ENCODE measurements at regions of chr22 and their contacts with region 1.

Region 1: DNA sequence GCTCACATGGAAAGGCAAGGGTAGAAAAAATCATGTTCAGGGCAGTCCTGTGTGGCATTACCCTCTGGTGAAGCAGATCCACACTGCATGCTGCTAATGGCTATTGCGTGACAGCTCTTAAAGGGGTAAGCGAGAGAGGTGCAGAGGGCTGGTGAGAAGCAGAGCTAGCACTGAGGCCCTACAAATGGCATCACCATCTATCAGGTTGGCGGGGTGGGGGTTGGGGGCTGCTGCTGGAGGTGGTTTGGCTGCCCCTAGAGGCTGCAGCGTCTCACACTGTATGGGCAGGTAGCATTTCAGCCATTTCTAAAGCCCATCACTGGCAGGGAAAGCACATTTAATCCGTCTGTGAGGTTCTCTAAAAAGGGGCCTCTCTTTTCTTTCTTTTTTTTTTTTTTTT is 16.9 kb upstream of the TMA7B start:
- DNase-seq: no peak
- ATAC-seq: peak; percentile 51
- H3K4me3 Mint-ChIP-seq: peak overlapping the region; percentile 79
- H3K27ac Mint-ChIP-seq: peak overlapping the region; percentile 95
- H3K4me1 Mint-ChIP-seq: peaks cover 83% of the 10 kb centered on the region
- H3K27me3 Mint-ChIP-seq: no peaks in the 10 kb centered on the region

Region 2: GRCh38 chr22:39908737-39909136 is 34.6 kb before region 1 on chr22:
- POLR2A ChIA-PET with region 1: interaction called, 20 read pairs
- DNase-seq: no peak
- ATAC-seq: peak; percentile 45
- H3K4me3 Mint-ChIP-seq: peak overlapping the region; percentile 99
- H3K27ac Mint-ChIP-seq: peak overlapping the region; percentile 96
- H3K4me1 Mint-ChIP-seq: peaks cover 65% of the 10 kb centered on the region
- H3K27me3 Mint-ChIP-seq: no peaks in the 10 kb centered on the region

Region 3: GRCh38 chr22:39927544-39927943 is 15.8 kb before region 1 on chr22:
- POLR2A ChIA-PET with region 1: interaction called, 29 read pairs
- DNase-seq: no peak
- ATAC-seq: peak; percentile 24
- H3K4me3 Mint-ChIP-seq: no peak overlapping the region
- H3K27ac Mint-ChIP-seq: no peak overlapping the region
- H3K4me1 Mint-ChIP-seq: peaks cover 34% of the 10 kb centered on the region
- H3K27me3 Mint-ChIP-seq: no peaks in the 10 kb centered on the region

Region 4: DNA sequence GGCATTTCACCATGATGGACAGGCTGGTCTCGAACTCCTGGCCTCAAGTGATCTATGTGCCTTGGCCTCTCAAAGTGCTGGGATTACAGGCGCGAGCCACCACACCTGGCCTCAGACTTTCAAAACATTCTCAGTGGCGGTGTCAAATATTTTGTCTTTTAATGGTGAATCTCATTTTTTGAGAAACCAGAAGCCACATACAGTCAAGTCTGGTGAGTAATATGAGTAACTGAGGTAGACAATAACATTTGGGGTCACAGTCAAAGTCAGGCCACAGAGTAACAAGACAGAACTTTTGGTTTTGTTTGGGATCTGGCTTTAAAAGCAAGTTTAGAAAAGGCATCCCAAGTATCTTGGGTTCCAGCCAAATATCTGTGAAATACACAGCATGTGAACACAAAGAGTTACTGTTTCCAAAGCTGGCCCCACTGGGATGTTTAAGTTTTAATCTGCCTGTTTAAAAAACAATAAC is 11.3 kb after region 1 on chr22:
- POLR2A ChIA-PET with region 1: interaction called, 16 read pairs
- DNase-seq: no peak
- ATAC-seq: peak; percentile 22
- H3K4me3 Mint-ChIP-seq: peak overlapping the region; percentile 28
- H3K27ac Mint-ChIP-seq: peak overlapping the region; percentile 25
- H3K4me1 Mint-ChIP-seq: peaks cover 89% of the 10 kb centered on the region
- H3K27me3 Mint-ChIP-seq: no peaks in the 10 kb centered on the region